ENCODE measurements at regions of chr16 and their contacts with region 1.

Region 1: DNA sequence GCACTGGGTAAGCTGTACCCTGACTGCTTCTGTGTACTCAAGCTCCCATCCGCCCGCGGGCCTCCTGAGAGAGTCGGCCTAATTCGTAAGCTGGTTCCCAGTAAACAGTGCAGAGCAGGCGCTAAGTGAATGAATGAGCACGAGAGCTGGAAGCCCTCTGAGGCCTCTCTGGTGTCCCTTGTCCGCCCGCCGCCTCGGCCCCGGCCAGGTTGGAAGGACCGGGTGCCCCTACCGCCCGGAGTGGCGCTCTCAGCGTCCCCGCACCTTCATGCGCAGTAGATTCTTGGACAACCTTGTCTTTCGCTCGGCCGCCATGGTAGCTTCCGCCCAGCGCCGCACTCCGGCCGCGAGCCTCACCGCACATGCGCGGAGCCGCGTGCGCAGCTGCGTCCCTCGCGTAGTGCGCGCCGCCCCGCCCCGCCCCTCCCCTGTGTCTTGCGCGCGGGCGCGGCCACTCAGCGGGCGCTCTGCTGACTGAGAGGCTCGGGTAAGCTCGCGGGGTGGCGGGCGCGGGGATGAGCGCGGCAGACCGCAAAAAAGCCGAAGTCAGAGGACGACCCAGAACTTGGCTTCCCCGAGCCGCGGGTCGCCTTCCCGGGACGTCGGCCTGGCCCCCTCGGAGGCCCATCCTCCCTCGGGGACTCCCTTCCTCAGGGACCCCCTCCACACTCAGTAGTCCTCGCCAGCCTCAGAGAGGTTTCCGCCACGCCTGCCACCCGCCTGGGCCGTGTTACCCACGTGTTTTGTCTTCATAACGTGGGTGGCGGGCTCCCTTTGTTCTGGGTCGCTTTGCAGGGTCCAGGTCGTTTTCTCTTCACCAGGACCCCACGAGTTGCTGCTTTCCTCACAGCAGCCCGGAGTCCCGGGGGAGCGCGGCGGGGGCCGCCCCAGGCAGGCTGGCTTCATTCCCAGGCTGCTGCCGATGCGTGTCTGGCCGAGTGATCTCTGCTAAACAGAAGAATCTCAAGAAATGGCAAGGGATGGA is at the start of gene MPHOSPH6:
- DNase-seq: peak; percentile 84
- ATAC-seq: peak; percentile 96
- H3K4me3 ChIP-seq: peak within 1 kb of the TSS; percentile 77 to 97 (median 85)
- H3K27ac ChIP-seq: peak within 1 kb of the TSS; percentile 84
- H3K4me1 ChIP-seq: peaks cover 43% of the 10 kb centered on the region
- H3K27me3 ChIP-seq: peaks cover 0 to 20% of the 10 kb centered on the region in 2 experiments; a peak in 4 of 5 replicates
- CTCF ChIP-seq: peak; percentile 35
- EP300 ChIP-seq: peak in 1 of 2 experiments; percentile 29; a peak in 1 of 4 replicates
- POLR2A ChIP-seq: peak; percentile 92 to 95
- RAD21 ChIP-seq: peak; percentile 51
- total RNA-seq, gene MPHOSPH6: 76.4 and 96.7 TPM in 2 replicates

Region 2: GRCh38 chr16:82050909-82051357 is 119.2 kb before region 1 on chr16:
- CTCF ChIA-PET with region 1: no interaction called
- POLR2A ChIA-PET with region 1: interaction called, 10 read pairs
- in situ Hi-C with region 1: no loop called
- intact Hi-C with region 1: no loop called
- DNase-seq: peak; percentile 92
- ATAC-seq: peak; percentile 66
- H3K4me3 ChIP-seq: peak overlapping the region in 1 of 3 experiments; percentile 27; a peak in 1 of 6 replicates
- H3K27ac ChIP-seq: peak overlapping the region; percentile 64
- H3K4me1 ChIP-seq: peaks cover 100% of the 10 kb centered on the region
- H3K27me3 ChIP-seq: no peaks in the 10 kb centered on the region
- CTCF ChIP-seq: no peak
- EP300 ChIP-seq: peak in 1 of 2 experiments; percentile 89; a peak in 2 of 4 replicates
- POLR2A ChIP-seq: no peak
- RAD21 ChIP-seq: no peak

Region 3: GRCh38 chr16:82061861-82062525 is 108.2 kb before region 1 on chr16:
- CTCF ChIA-PET with region 1: no interaction called
- POLR2A ChIA-PET with region 1: interaction called, 13 read pairs
- in situ Hi-C with region 1: no loop called
- intact Hi-C with region 1: no loop called
- DNase-seq: no peak
- ATAC-seq: peak; percentile 15; the same call in 2 of the 3 replicates
- H3K4me3 ChIP-seq: peak overlapping the region in 1 of 3 experiments; percentile 2; a peak in 1 of 6 replicates
- H3K27ac ChIP-seq: peak overlapping the region; percentile 54
- H3K4me1 ChIP-seq: peaks cover 93% of the 10 kb centered on the region
- H3K27me3 ChIP-seq: no peaks in the 10 kb centered on the region
- CTCF ChIP-seq: peak; percentile 58
- EP300 ChIP-seq: no peak
- POLR2A ChIP-seq: no peak
- RAD21 ChIP-seq: peak; percentile 36; the same call in 1 of the 2 replicates

Region 4: DNA sequence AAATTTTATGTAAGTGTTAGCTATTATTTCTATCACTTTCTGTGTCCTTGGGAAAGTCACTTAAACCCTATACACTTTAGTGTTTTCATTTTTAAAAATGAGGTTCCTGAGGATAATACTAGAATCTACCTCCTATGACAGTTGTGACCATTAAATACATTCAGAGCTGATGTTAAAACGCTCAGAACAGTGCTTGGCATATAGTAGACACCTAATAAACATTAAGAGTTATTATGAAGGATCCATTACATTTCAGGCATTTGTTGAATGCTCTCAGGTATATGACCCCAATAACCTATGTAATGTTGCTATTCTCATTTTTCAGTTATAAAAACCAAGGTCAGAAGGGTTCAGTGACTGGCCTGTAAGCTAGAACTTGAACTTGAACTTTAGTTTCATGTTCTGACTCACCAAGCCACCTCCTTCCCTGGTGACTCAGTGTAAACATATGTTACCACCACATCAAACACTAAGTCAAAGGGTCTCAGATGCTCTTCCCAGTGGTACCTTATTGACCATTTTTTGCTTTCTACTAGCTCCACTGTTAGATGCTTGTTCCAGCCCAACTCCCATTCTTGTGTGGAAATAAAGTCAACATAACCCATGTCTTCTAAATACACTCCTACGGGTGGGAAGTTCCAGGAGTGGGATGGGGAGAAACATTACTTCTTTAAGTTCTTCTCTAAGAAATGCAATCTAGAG is 87.5 kb before region 1 on chr16:
- CTCF ChIA-PET with region 1: no interaction called
- POLR2A ChIA-PET with region 1: interaction called, 16 read pairs
- in situ Hi-C with region 1: no loop called
- intact Hi-C with region 1: loop called (anchors 5 kb)
- DNase-seq: peak; percentile 97
- ATAC-seq: peak; percentile 90
- H3K4me3 ChIP-seq: no peak overlapping the region
- H3K27ac ChIP-seq: no peak overlapping the region
- H3K4me1 ChIP-seq: peaks cover 63% of the 10 kb centered on the region
- H3K27me3 ChIP-seq: no peaks in the 10 kb centered on the region
- CTCF ChIP-seq: no peak
- EP300 ChIP-seq: peak in 1 of 2 experiments; percentile 93; a peak in 2 of 4 replicates
- POLR2A ChIP-seq: 0 out of 4 replicates have a peak, but pooled peaks of 1 of the 2 experiments have one; percentile 2
- RAD21 ChIP-seq: no peak

Region 5: GRCh38 chr16:82152196-82153112 is 17.7 kb before region 1 on chr16:
- CTCF ChIA-PET with region 1: no interaction called
- POLR2A ChIA-PET with region 1: interaction called, 12 read pairs
- in situ Hi-C with region 1: no loop called
- intact Hi-C with region 1: no loop called
- DNase-seq: peak; percentile 20
- ATAC-seq: no peak
- H3K4me3 ChIP-seq: no peak overlapping the region
- H3K27ac ChIP-seq: no peak overlapping the region
- H3K4me1 ChIP-seq: peaks cover 8% of the 10 kb centered on the region; the same call in 1 of the 2 replicates
- H3K27me3 ChIP-seq: no peaks in the 10 kb centered on the region
- CTCF ChIP-seq: no peak
- EP300 ChIP-seq: no peak
- POLR2A ChIP-seq: no peak
- RAD21 ChIP-seq: no peak

Region 6: GRCh38 chr16:82236415-82236814 is 66.3 kb after region 1 on chr16:
- CTCF ChIA-PET with region 1: no interaction called
- POLR2A ChIA-PET with region 1: no interaction called
- in situ Hi-C with region 1: no loop called
- intact Hi-C with region 1: no loop called
- DNase-seq: no peak
- ATAC-seq: no peak
- H3K4me3 ChIP-seq: no peak overlapping the region
- H3K27ac ChIP-seq: no peak overlapping the region
- H3K4me1 ChIP-seq: no peaks in the 10 kb centered on the region
- H3K27me3 ChIP-seq: no peaks in the 10 kb centered on the region
- CTCF ChIP-seq: no peak
- EP300 ChIP-seq: no peak
- POLR2A ChIP-seq: no peak
- RAD21 ChIP-seq: no peak